Natural killer cell (primary cell): ENCODE measurements at regions of chr13 and their contacts with region 1.

Region 1: GRCh38 chr13:48126944-48127830 is 32.3 kb upstream of the MED4 start:
- DNase-seq: peak in 1 of 2 donors; percentile 84
- ATAC-seq: peak; percentile 91 to 98 (median 94)
- H3K4me3 ChIP-seq: no peak overlapping the region
- H3K4me3 Mint-ChIP-seq: no peak overlapping the region
- H3K27ac ChIP-seq: peak overlapping the region; percentile 8
- H3K27ac Mint-ChIP-seq: peak overlapping the region; percentile 83 to 86
- H3K4me1 ChIP-seq: no peaks in the 10 kb centered on the region
- H3K4me1 Mint-ChIP-seq: peaks cover 5 to 9% of the 10 kb centered on the region in 2 donors
- H3K27me3 ChIP-seq: no peaks in the 10 kb centered on the region
- H3K27me3 Mint-ChIP-seq: peaks cover 0 to 3% of the 10 kb centered on the region in 2 donors
- CTCF ChIP-seq: peak; percentile 78

Region 2: GRCh38 chr13:48233046-48233907 is 106.1 kb after region 1 on chr13 and contains the start of gene ITM2B:
- intact Hi-C with region 1: loop called (anchors 1 kb)
- DNase-seq: peak; percentile 62 to 86
- ATAC-seq: peak; percentile 62 to 83 (median 73)
- H3K4me3 ChIP-seq: peak within 1 kb of the TSS; percentile 96
- H3K4me3 Mint-ChIP-seq: peak within 1 kb of the TSS; percentile 94
- H3K27ac ChIP-seq: peak within 1 kb of the TSS; percentile 97
- H3K27ac Mint-ChIP-seq: peak within 1 kb of the TSS; percentile 92 to 94
- H3K4me1 ChIP-seq: peaks cover 15% of the 10 kb centered on the region
- H3K4me1 Mint-ChIP-seq: peaks cover 47 to 51% of the 10 kb centered on the region in 2 donors
- H3K27me3 ChIP-seq: no peaks in the 10 kb centered on the region
- H3K27me3 Mint-ChIP-seq: peaks cover 0 to 2% of the 10 kb centered on the region in 2 donors
- CTCF ChIP-seq: peak; percentile 39
- total RNA-seq, gene ITM2B: 305 to 387 (median 309) TPM

Region 3: DNA sequence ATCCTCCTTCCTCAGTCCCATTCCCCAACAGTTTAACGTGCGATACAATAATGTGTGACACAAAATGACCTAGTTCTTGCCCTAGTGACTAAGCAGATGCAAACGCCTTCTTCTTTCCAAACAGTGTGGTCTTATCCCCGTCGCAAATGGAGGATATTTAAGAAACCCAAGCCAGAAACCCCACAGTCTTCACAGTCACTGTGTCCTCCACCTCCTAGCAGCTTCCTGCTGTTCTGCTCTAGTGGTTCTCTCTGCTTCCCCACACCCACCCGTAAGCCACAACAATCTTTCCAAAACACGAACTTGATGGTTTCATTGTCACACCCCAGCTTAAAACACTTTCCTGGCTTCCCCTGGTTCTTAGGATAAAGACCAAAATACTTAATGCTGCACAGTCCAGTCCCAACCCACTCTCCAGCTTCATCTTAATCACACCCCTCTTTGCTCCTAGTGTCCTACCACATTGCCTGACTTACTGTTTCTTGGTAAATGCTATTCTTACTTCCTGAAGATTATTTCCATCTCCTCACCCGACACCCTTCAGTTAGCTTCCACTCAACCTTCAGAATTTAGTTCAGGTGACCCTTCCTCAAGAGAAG is 138.1 kb after region 1 on chr13:
- intact Hi-C with region 1: no loop called
- DNase-seq: peak in 1 of 2 donors; percentile 26
- ATAC-seq: peak; percentile 50 to 86 (median 79)
- H3K4me3 ChIP-seq: no peak overlapping the region
- H3K4me3 Mint-ChIP-seq: peak overlapping the region; percentile 52
- H3K27ac ChIP-seq: peak overlapping the region; percentile 54
- H3K27ac Mint-ChIP-seq: peak overlapping the region; percentile 62 to 90
- H3K4me1 ChIP-seq: peaks cover 8% of the 10 kb centered on the region
- H3K4me1 Mint-ChIP-seq: peaks cover 39 to 44% of the 10 kb centered on the region in 2 donors
- H3K27me3 ChIP-seq: no peaks in the 10 kb centered on the region
- H3K27me3 Mint-ChIP-seq: no peaks in the 10 kb centered on the region
- CTCF ChIP-seq: no peak

Region 4: DNA sequence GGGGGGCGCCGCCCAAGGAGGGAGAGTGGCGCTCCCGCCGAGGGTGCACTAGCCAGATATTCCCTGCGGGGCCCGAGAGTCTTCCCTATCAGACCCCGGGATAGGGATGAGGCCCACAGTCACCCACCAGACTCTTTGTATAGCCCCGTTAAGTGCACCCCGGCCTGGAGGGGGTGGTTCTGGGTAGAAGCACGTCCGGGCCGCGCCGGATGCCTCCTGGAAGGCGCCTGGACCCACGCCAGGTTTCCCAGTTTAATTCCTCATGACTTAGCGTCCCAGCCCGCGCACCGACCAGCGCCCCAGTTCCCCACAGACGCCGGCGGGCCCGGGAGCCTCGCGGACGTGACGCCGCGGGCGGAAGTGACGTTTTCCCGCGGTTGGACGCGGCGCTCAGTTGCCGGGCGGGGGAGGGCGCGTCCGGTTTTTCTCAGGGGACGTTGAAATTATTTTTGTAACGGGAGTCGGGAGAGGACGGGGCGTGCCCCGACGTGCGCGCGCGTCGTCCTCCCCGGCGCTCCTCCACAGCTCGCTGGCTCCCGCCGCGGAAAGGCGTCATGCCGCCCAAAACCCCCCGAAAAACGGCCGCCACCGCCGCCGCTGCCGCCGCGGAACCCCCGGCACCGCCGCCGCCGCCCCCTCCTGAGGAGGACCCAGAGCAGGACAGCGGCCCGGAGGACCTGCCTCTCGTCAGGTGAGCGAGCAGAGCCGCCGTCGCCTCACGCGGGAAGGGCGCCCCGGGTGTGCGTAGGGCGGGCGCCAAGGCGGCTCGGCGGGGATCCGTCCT is 176.4 kb after region 1 on chr13 and contains the start of gene RB1:
- intact Hi-C with region 1: loop called (anchors 10 kb)
- DNase-seq: peak; percentile 90 to 97
- ATAC-seq: peak; percentile 75 to 89 (median 86)
- H3K4me3 ChIP-seq: peak within 1 kb of the TSS; percentile 92
- H3K4me3 Mint-ChIP-seq: peak within 1 kb of the TSS; percentile 89
- H3K27ac ChIP-seq: peak within 1 kb of the TSS; percentile 97
- H3K27ac Mint-ChIP-seq: peak within 1 kb of the TSS; percentile 97 to 98
- H3K4me1 ChIP-seq: peaks cover 12% of the 10 kb centered on the region
- H3K4me1 Mint-ChIP-seq: peaks cover 26 to 33% of the 10 kb centered on the region in 2 donors
- H3K27me3 ChIP-seq: no peaks in the 10 kb centered on the region
- H3K27me3 Mint-ChIP-seq: no peaks in the 10 kb centered on the region
- CTCF ChIP-seq: no peak
- total RNA-seq, gene RB1: 25.5 to 28.3 (median 26.9) TPM

Region 5: GRCh38 chr13:48580185-48580803 is 453.1 kb after region 1 on chr13:
- intact Hi-C with region 1: loop called (anchors 1 kb)
- DNase-seq: peak; percentile 56 to 86
- ATAC-seq: peak; percentile 72 to 79 (median 78)
- H3K4me3 ChIP-seq: no peak overlapping the region
- H3K4me3 Mint-ChIP-seq: no peak overlapping the region
- H3K27ac ChIP-seq: no peak overlapping the region
- H3K27ac Mint-ChIP-seq: no peak overlapping the region
- H3K4me1 ChIP-seq: peaks cover 21% of the 10 kb centered on the region
- H3K4me1 Mint-ChIP-seq: peaks cover 6 to 27% of the 10 kb centered on the region in 2 donors
- H3K27me3 ChIP-seq: no peaks in the 10 kb centered on the region
- H3K27me3 Mint-ChIP-seq: peaks cover 6 to 12% of the 10 kb centered on the region in 2 donors
- CTCF ChIP-seq: peak; percentile 89

Region 6: DNA sequence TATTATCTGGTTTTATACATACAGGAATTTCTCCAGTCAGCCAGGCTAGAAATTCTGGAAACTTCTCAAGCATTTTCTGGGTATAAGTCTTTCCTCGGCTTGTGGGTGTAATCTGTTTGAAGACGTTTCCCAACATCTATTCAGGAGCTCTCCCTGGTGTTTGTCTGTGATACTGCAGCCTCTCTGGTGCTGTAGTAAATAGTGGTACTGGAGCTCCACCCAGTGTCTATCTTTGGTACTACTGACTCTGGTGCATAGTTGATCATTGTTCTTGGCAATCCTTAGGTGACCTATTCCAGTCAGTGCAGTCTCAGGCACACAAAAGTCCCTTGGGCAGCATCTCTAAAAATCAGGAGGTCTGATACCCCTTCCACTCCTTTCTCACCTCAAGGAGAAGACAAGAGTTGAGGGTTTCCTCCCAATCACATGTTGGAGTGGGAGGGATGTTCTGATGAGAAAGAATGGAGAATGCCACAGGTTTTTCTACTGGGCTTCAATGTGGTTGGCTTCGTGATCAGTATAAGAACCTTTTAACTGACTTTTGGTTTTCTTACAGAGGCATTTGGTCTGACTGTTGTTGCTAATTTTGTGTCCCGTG is 642.0 kb after region 1 on chr13:
- intact Hi-C with region 1: loop called (anchors 1 kb)
- DNase-seq: peak; percentile 68 to 92
- ATAC-seq: peak; percentile 100
- H3K4me3 ChIP-seq: no peak overlapping the region
- H3K4me3 Mint-ChIP-seq: no peak overlapping the region
- H3K27ac ChIP-seq: no peak overlapping the region
- H3K27ac Mint-ChIP-seq: no peak overlapping the region
- H3K4me1 ChIP-seq: no peaks in the 10 kb centered on the region
- H3K4me1 Mint-ChIP-seq: peaks cover 6 to 8% of the 10 kb centered on the region in 2 donors
- H3K27me3 ChIP-seq: peaks cover 4% of the 10 kb centered on the region
- H3K27me3 Mint-ChIP-seq: peaks cover 21 to 44% of the 10 kb centered on the region in 2 donors
- CTCF ChIP-seq: peak; percentile 100